ENCODE measurements at regions of chr1 and their contacts with region 1.

Region 1: DNA sequence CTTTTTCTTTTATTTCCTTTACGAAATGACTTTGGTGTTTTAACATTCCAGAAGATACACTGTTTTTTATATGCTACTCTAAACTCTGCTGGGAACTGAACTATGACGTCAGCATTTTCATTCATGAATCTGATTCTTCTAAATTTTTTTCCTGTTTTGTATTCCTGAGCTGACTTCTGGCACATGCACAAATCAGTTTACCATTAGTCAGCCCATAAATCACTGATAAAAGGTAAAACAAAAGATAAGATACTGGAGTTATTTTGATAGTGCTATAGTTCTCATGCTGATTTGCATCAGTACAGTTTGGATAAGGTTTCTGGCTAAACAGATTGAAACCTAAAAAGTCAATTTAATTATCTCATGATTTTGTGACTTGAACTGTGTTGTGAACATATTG is 10.4 kb downstream of the CAMTA1 start:
- DNase-seq: no peak
- H3K4me3 Mint-ChIP-seq: no peak overlapping the region
- H3K27ac Mint-ChIP-seq: no peak overlapping the region
- H3K4me1 Mint-ChIP-seq: no peaks in the 10 kb centered on the region
- H3K27me3 Mint-ChIP-seq: no peaks in the 10 kb centered on the region

Region 2: DNA sequence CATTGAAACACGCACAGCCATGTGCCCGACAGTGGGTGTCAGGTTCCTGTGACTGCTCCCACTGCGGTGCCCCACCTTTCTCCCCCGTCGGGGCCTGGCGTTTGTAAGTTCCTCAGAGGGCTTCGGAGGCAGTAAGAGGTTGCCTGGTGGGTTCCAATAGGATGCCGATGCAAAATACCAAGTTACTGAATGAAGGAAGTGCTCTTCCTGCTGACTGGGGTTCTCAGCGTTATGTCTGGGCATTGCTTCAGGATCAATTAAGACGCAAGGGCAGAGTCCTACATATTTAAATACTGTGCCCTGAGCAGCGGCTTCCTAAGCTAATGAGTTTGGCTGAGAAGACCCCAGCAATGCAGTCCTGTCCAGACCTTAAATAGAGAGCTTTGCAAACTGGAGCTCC is 65.2 kb before region 1 on chr1:
- CTCF ChIA-PET with region 1: no interaction called
- POLR2A ChIA-PET with region 1: no interaction called
- DNase-seq: no peak
- H3K4me3 Mint-ChIP-seq: no peak overlapping the region
- H3K27ac Mint-ChIP-seq: no peak overlapping the region
- H3K4me1 Mint-ChIP-seq: peaks cover 1% of the 10 kb centered on the region
- H3K27me3 Mint-ChIP-seq: peaks cover 12% of the 10 kb centered on the region

Region 3: GRCh38 chr1:6784560-6785317 is 10.9 kb before region 1 on chr1:
- CTCF ChIA-PET with region 1: no interaction called
- POLR2A ChIA-PET with region 1: interaction called, 10 read pairs
- DNase-seq: peak; percentile 100
- H3K4me3 Mint-ChIP-seq: peak overlapping the region; percentile 89
- H3K27ac Mint-ChIP-seq: peak overlapping the region; percentile 84
- H3K4me1 Mint-ChIP-seq: peaks cover 42% of the 10 kb centered on the region
- H3K27me3 Mint-ChIP-seq: peaks cover 7% of the 10 kb centered on the region

Region 4: GRCh38 chr1:6854165-6854564 is 58.5 kb after region 1 on chr1:
- CTCF ChIA-PET with region 1: no interaction called
- POLR2A ChIA-PET with region 1: no interaction called
- DNase-seq: no peak
- H3K4me3 Mint-ChIP-seq: no peak overlapping the region
- H3K27ac Mint-ChIP-seq: no peak overlapping the region
- H3K4me1 Mint-ChIP-seq: no peaks in the 10 kb centered on the region
- H3K27me3 Mint-ChIP-seq: no peaks in the 10 kb centered on the region